IMR-90 (cell line): ENCODE measurements at regions of chr1 and their contacts with region 1.

Region 1: GRCh38 chr1:48498096-48498791 is 26.2 kb upstream of the SPATA6 start:
- DNase-seq: peak; percentile 70
- ATAC-seq: peak; percentile 75
- H3K4me3 ChIP-seq: no peak overlapping the region
- H3K27ac ChIP-seq: no peak overlapping the region
- H3K4me1 ChIP-seq: peaks cover 13% of the 10 kb centered on the region
- H3K27me3 ChIP-seq: no peaks in the 10 kb centered on the region
- CTCF ChIP-seq: peak; percentile 93
- POLR2A ChIP-seq: no peak
- RAD21 ChIP-seq: peak; percentile 73

Region 2: DNA sequence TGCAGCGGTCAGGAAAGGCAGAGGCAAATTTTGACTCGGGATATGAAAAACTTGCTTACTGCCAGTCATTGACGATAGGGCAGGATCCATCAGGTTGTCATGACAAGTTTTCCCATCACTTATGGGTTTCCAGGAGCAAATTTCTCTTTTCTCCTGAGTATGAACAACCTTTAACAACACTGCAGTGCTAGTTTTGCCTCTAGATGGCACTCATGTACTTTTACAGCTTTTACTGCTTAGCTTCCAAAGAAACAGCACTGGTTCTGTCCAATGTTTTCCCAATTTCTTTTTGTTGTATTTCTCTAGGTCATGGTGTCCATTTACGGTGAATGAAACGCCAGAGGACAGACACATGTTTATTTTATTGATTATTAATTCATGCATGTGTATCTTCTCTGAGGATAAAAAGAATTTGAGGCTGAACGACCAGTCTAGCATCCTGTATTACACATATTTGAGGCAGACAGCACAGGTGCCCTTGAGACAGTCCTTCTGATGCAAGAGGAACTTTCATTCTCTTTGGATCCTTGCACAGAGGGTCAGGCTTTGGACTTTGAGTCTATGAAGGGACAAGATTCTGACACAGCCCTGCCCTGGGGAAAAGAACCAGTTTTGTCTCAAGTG is 388.7 kb before region 1 on chr1:
- CTCF ChIA-PET with region 1: interaction called, 6 read pairs
- POLR2A ChIA-PET with region 1: no interaction called
- dilution Hi-C with region 1: no loop called
- in situ Hi-C with region 1: loop called (anchors 10 kb)
- intact Hi-C with region 1: loop called (anchors 1 kb)
- DNase-seq: peak; percentile 61
- ATAC-seq: peak; percentile 90
- H3K4me3 ChIP-seq: no peak overlapping the region
- H3K27ac ChIP-seq: no peak overlapping the region
- H3K4me1 ChIP-seq: no peaks in the 10 kb centered on the region
- H3K27me3 ChIP-seq: no peaks in the 10 kb centered on the region
- CTCF ChIP-seq: peak; percentile 83
- POLR2A ChIP-seq: no peak
- RAD21 ChIP-seq: peak; percentile 85

Region 3: GRCh38 chr1:48202030-48202752 is 296.1 kb before region 1 on chr1:
- CTCF ChIA-PET with region 1: no interaction called
- POLR2A ChIA-PET with region 1: no interaction called
- dilution Hi-C with region 1: no loop called
- in situ Hi-C with region 1: no loop called
- intact Hi-C with region 1: loop called (anchors 2 kb)
- DNase-seq: peak; percentile 81
- ATAC-seq: peak; percentile 97
- H3K4me3 ChIP-seq: no peak overlapping the region
- H3K27ac ChIP-seq: no peak overlapping the region
- H3K4me1 ChIP-seq: no peaks in the 10 kb centered on the region
- H3K27me3 ChIP-seq: no peaks in the 10 kb centered on the region; the same call in 1 of the 2 replicates
- CTCF ChIP-seq: peak; percentile 87
- POLR2A ChIP-seq: no peak
- RAD21 ChIP-seq: peak; percentile 65

Region 4: GRCh38 chr1:48356901-48357300 is 141.3 kb before region 1 on chr1:
- CTCF ChIA-PET with region 1: interaction called, 5 read pairs
- POLR2A ChIA-PET with region 1: no interaction called
- dilution Hi-C with region 1: no loop called
- in situ Hi-C with region 1: no loop called
- intact Hi-C with region 1: loop called (anchors 1 kb)
- DNase-seq: no peak
- ATAC-seq: no peak
- H3K4me3 ChIP-seq: no peak overlapping the region
- H3K27ac ChIP-seq: no peak overlapping the region
- H3K4me1 ChIP-seq: no peaks in the 10 kb centered on the region
- H3K27me3 ChIP-seq: no peaks in the 10 kb centered on the region
- CTCF ChIP-seq: no peak
- POLR2A ChIP-seq: no peak
- RAD21 ChIP-seq: peak; percentile 25

Region 5: DNA sequence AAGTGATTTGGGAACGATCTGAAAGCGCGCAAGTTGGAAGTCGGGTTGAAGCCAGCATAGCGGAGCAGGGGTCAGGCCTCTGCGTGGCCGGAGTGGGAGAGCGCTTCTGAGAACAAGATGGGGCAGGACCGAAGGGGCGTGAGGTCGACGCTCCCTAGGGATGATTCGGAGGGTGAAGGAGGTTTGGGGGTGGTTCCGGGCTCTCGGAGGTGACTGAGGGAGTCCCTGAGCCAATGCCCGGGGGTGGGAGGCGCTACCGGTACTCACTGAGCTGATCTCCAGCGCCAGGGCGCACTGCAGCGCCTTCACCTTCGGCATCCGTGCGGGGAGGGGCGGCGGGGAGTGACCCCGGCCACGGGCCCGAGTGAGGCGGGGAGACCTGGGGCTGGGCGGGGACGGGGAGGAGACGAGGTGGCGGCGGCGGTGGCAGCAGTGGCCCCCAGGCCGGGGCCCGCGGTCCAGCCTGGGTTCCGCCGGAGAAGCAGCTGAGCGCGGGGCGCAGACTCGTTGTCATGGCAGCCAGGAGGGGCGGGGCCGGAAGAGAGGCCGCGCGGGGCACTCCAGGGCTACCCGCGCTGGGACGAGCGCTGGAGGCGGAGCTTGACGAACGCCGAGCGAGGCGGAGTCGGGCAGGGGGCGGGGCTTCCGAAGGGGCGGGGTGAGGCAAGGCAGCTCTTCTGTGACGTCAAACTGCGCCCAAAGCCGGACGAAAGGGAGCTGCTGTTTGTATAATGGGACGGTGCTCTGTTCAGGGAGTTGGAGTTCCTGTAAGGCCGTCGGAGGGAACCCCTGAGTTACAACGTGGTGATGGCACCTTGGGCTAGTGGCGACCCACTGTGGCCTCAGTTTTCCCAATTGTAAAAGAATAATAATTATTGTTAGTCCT is 26.3 kb before region 1 on chr1 and contains the start of gene SPATA6:
- CTCF ChIA-PET with region 1: interaction called, 5 read pairs
- POLR2A ChIA-PET with region 1: no interaction called
- dilution Hi-C with region 1: no loop called
- in situ Hi-C with region 1: no loop called
- intact Hi-C with region 1: loop called (anchors 1 kb)
- DNase-seq: peak; percentile 91
- ATAC-seq: peak; percentile 97
- H3K4me3 ChIP-seq: peak within 1 kb of the TSS; percentile 84
- H3K27ac ChIP-seq: peak within 1 kb of the TSS; percentile 84
- H3K4me1 ChIP-seq: peaks cover 4% of the 10 kb centered on the region; the same call in 1 of the 2 replicates
- H3K27me3 ChIP-seq: no peaks in the 10 kb centered on the region
- CTCF ChIP-seq: no peak
- POLR2A ChIP-seq: peak; percentile 82
- RAD21 ChIP-seq: peak; percentile 10; the same call in 1 of the 2 replicates
- total RNA-seq, gene SPATA6: 2.0 and 2.2 TPM in 2 replicates